HCT116 (cell line): ENCODE measurements at regions of chr19 and their contacts with region 1.

Region 1: DNA sequence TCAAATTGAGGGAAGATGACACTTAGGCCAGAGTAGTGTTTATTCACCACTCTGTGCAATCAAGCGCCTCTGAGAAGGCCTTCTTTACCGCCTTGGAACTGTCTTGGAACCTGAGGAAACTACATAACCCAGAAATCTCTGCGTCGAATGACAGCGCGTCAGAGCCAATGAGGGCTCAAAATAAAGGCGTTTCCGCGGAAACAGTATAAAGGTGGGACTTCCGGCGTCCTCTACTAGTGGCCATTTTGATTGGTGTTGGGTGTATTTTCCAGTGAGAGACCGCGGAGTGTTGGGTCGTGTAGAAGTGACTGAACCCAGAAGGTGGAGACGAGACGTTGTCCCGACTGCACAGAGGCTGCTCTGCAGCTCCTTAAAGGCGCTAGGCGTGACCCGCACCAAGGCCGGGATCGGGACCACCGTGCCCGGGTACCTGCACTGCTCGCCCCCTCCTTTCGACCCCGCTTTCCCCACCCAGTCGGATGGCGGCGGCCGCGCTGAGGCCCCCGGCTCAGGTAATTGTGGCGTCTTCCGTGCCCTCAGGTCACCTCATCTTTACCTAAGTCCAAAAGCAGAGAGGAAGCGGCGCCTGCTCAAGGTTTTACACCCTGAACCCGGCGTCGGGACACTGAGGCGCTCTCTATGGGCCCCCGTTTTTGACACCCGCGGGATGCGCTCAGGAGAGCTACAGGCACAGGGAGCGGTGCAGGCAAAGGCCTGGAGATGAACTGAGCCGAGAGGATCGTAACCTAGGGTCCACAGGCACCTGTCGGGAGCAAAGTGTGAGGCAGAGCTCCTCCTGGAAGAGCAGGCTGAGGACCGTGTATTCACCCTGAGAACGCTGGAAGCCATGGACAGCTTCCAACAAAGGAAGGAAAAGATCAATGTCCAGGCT is at the start of gene ZNF776:
- DNase-seq: peak; percentile 86
- ATAC-seq: peak; percentile 97
- H3K4me3 ChIP-seq: peak within 1 kb of the TSS; percentile 87 to 88
- H3K27ac ChIP-seq: peak within 1 kb of the TSS; percentile 64
- H3K4me1 ChIP-seq: peaks cover 0 to 8% of the 10 kb centered on the region in 2 experiments; a peak in 1 of 4 replicates
- H3K27me3 ChIP-seq: no peaks in the 10 kb centered on the region
- CTCF ChIP-seq: no peak
- POLR2A ChIP-seq: peak; percentile 48
- RAD21 ChIP-seq: no peak
- total RNA-seq, gene ZNF776: 8.6 TPM

Region 2: DNA sequence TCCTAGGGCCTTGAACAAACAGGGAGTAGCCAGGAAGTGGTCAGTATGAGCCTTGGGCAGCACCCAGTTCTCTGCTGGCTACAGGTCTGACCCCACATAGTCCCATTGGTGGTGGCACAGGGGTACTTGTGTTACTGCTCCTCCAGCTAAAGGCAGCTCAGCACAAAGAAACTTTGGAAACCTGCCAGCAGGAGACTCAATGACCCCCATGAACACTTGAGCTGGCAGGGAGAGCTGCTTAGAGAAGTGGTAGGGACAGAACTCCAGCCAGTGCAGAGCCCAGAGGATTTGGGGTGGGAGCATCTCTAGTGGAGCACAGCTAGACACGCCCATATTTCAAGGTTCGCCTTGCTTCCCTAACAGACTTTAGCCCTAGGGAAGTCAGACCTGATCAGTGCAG is 12.3 kb after region 1 on chr19:
- CTCF ChIA-PET with region 1: no interaction called
- POLR2A ChIA-PET with region 1: no interaction called
- RAD21 ChIA-PET with region 1: no interaction called
- intact Hi-C with region 1: no loop called
- DNase-seq: no peak
- ATAC-seq: no peak
- H3K4me3 ChIP-seq: no peak overlapping the region
- H3K27ac ChIP-seq: no peak overlapping the region
- H3K4me1 ChIP-seq: no peaks in the 10 kb centered on the region
- H3K27me3 ChIP-seq: no peaks in the 10 kb centered on the region
- CTCF ChIP-seq: no peak
- POLR2A ChIP-seq: no peak
- RAD21 ChIP-seq: no peak

Region 3: DNA sequence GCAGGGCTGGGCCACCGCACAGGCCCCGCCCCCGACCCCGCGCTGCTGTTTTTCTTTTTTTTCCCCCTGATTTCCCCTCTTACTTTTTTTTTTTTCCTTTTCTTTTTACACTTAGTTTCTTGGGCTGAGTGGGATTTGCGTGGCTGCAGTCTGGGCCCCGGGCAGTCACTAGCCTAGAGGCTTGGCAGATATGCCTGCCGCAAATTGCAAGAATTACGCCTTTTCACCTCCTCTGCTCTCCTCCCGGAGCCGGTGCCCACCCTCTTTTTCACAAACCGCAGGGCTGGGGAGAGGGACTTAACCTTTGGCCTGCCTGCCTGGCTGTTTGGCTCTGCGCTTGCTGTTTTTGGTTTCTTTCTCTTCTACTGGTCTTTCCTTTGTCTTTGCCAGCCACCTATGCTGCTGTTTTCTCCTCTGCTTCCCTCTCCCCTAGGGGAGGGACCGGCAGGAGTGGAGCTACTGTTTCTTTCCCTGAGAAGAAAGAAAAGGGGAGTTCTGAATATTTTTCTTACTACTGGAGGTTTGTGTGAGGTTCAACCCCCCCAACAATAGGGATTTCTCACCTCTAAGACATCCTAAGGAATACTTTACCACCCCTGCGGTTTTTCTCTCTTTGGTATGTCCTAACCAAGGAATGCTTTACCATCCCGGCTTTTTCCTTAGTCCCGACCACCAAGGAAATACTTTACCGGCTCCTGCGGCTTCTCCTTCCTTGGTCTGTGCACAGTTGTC is 56.9 kb after region 1 on chr19:
- CTCF ChIA-PET with region 1: no interaction called
- POLR2A ChIA-PET with region 1: no interaction called
- RAD21 ChIA-PET with region 1: no interaction called
- intact Hi-C with region 1: loop called (anchors 5 kb)
- DNase-seq: peak; percentile 12
- ATAC-seq: peak; percentile 73
- H3K4me3 ChIP-seq: peak overlapping the region; percentile 55 to 61
- H3K27ac ChIP-seq: peak overlapping the region; percentile 58
- H3K4me1 ChIP-seq: peaks cover 9 to 20% of the 10 kb centered on the region in 2 experiments; a peak in 3 of 4 replicates
- H3K27me3 ChIP-seq: no peaks in the 10 kb centered on the region
- CTCF ChIP-seq: no peak
- POLR2A ChIP-seq: no peak
- RAD21 ChIP-seq: no peak

Region 4: DNA sequence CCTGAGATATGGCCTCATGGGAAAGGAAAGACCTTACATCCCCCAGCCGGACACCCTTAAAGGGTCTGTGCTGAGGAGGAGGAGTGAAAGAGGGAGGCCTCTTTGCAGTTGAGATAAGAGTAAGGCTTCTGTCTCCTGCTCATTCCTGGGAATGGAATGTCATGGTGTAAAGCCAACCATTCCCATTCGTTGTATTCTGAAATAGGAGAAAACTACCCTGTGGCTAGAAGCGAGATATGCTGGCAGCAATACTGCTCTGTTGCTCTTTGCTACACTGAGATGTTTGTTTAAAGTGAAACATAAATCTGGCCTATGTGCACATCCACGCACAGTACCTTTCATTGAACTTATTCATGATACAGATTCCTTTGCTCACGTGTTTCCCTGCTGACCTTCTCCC is 82.5 kb after region 1 on chr19:
- CTCF ChIA-PET with region 1: no interaction called
- POLR2A ChIA-PET with region 1: no interaction called
- RAD21 ChIA-PET with region 1: no interaction called
- intact Hi-C with region 1: no loop called
- DNase-seq: no peak
- ATAC-seq: no peak
- H3K4me3 ChIP-seq: no peak overlapping the region
- H3K27ac ChIP-seq: no peak overlapping the region
- H3K4me1 ChIP-seq: peaks cover 0 to 8% of the 10 kb centered on the region in 2 experiments; a peak in 2 of 4 replicates
- H3K27me3 ChIP-seq: no peaks in the 10 kb centered on the region
- CTCF ChIP-seq: no peak
- POLR2A ChIP-seq: no peak
- RAD21 ChIP-seq: no peak

Region 5: GRCh38 chr19:57914531-57914930 is 167.7 kb after region 1 on chr19:
- CTCF ChIA-PET with region 1: no interaction called
- POLR2A ChIA-PET with region 1: interaction called, 3 read pairs
- RAD21 ChIA-PET with region 1: no interaction called
- intact Hi-C with region 1: loop called (anchors 1 kb)
- DNase-seq: no peak
- ATAC-seq: no peak
- H3K4me3 ChIP-seq: no peak overlapping the region
- H3K27ac ChIP-seq: no peak overlapping the region
- H3K4me1 ChIP-seq: peaks cover 0 to 6% of the 10 kb centered on the region in 2 experiments; a peak in 1 of 4 replicates
- H3K27me3 ChIP-seq: no peaks in the 10 kb centered on the region
- CTCF ChIP-seq: no peak
- POLR2A ChIP-seq: no peak
- RAD21 ChIP-seq: no peak